Thyroid gland (tissue), 4 donors: ENCODE measurements at regions of chr9 and their contacts with region 1.

Region 1: GRCh38 chr9:134443168-134444037 is 117.1 kb downstream of the RXRA start:
- DNase-seq: peak; percentile 87 to 90
- H3K4me3 ChIP-seq: no peak overlapping the region
- H3K27ac ChIP-seq: no peak overlapping the region
- H3K4me1 ChIP-seq: peaks cover 12 to 24% of the 10 kb centered on the region in 2 donors
- H3K27me3 ChIP-seq: no peaks in the 10 kb centered on the region
- CTCF ChIP-seq: peak; percentile 93 to 99 (median 97)
- POLR2A ChIP-seq: no peak

Region 2: GRCh38 chr9:134171316-134172197 is 271.8 kb before region 1 on chr9:
- intact Hi-C with region 1: loop called (anchors 2 kb)
- DNase-seq: no peak
- H3K4me3 ChIP-seq: no peak overlapping the region
- H3K27ac ChIP-seq: peak overlapping the region in 1 of 3 donors; percentile 23
- H3K4me1 ChIP-seq: peaks cover 9 to 24% of the 10 kb centered on the region in 2 donors
- H3K27me3 ChIP-seq: no peaks in the 10 kb centered on the region
- CTCF ChIP-seq: no peak
- POLR2A ChIP-seq: no peak

Region 3: GRCh38 chr9:134325817-134326723 is 117.3 kb before region 1 on chr9 and contains the start of gene RXRA:
- intact Hi-C with region 1: loop called (anchors 5 kb)
- DNase-seq: peak; percentile 89 to 90
- H3K4me3 ChIP-seq: peak within 1 kb of the TSS; percentile 46 to 81 (median 74)
- H3K27ac ChIP-seq: peak within 1 kb of the TSS; percentile 86 to 99 (median 98)
- H3K4me1 ChIP-seq: peaks cover 59 to 76% of the 10 kb centered on the region in 2 donors
- H3K27me3 ChIP-seq: no peaks in the 10 kb centered on the region
- CTCF ChIP-seq: peak in 1 of 6 experiments; percentile 48
- POLR2A ChIP-seq: peak; percentile 73 to 85
- total RNA-seq, gene RXRA: 39.4 to 81.3 (median 67.4) TPM